IMR-90 (cell line): ENCODE measurements at regions of chr3 and their contacts with region 1.

Region 1: GRCh38 chr3:129824926-129825541 is 68.5 kb downstream of the TMCC1 start:
- DNase-seq: peak; percentile 58
- ATAC-seq: no peak
- H3K4me3 ChIP-seq: no peak overlapping the region
- H3K27ac ChIP-seq: no peak overlapping the region
- H3K4me1 ChIP-seq: peaks cover 2% of the 10 kb centered on the region; the same call in 1 of the 2 replicates
- H3K27me3 ChIP-seq: no peaks in the 10 kb centered on the region
- CTCF ChIP-seq: peak; percentile 64
- POLR2A ChIP-seq: no peak
- RAD21 ChIP-seq: peak; percentile 81

Region 2: GRCh38 chr3:129112308-129113052 is 712.6 kb before region 1 on chr3:
- CTCF ChIA-PET with region 1: no interaction called
- POLR2A ChIA-PET with region 1: no interaction called
- dilution Hi-C with region 1: no loop called
- in situ Hi-C with region 1: no loop called
- intact Hi-C with region 1: no loop called
- DNase-seq: peak; percentile 35
- ATAC-seq: no peak
- H3K4me3 ChIP-seq: no peak overlapping the region
- H3K27ac ChIP-seq: no peak overlapping the region
- H3K4me1 ChIP-seq: peaks cover 4% of the 10 kb centered on the region
- H3K27me3 ChIP-seq: no peaks in the 10 kb centered on the region
- CTCF ChIP-seq: no peak
- POLR2A ChIP-seq: no peak
- RAD21 ChIP-seq: no peak

Region 3: GRCh38 chr3:129383292-129383860 is 441.7 kb before region 1 on chr3:
- CTCF ChIA-PET with region 1: interaction called, 4 read pairs
- POLR2A ChIA-PET with region 1: no interaction called
- dilution Hi-C with region 1: no loop called
- in situ Hi-C with region 1: no loop called
- intact Hi-C with region 1: loop called (anchors 1 kb)
- DNase-seq: peak; percentile 85
- ATAC-seq: peak; percentile 98
- H3K4me3 ChIP-seq: no peak overlapping the region
- H3K27ac ChIP-seq: no peak overlapping the region
- H3K4me1 ChIP-seq: peaks cover 7% of the 10 kb centered on the region
- H3K27me3 ChIP-seq: no peaks in the 10 kb centered on the region
- CTCF ChIP-seq: peak; percentile 90
- POLR2A ChIP-seq: peak; percentile 56; the same call in 1 of the 2 replicates
- RAD21 ChIP-seq: peak; percentile 93

Region 4: GRCh38 chr3:129627429-129628168 is 197.4 kb before region 1 on chr3:
- CTCF ChIA-PET with region 1: interaction called, 4 read pairs
- POLR2A ChIA-PET with region 1: no interaction called
- dilution Hi-C with region 1: no loop called
- in situ Hi-C with region 1: no loop called
- intact Hi-C with region 1: loop called (anchors 1 kb)
- DNase-seq: peak; percentile 75
- ATAC-seq: peak; percentile 29
- H3K4me3 ChIP-seq: peak overlapping the region; percentile 29
- H3K27ac ChIP-seq: peak overlapping the region; percentile 88
- H3K4me1 ChIP-seq: peaks cover 20% of the 10 kb centered on the region
- H3K27me3 ChIP-seq: no peaks in the 10 kb centered on the region
- CTCF ChIP-seq: peak; percentile 74
- POLR2A ChIP-seq: peak; percentile 46
- RAD21 ChIP-seq: peak; percentile 89

Region 5: DNA sequence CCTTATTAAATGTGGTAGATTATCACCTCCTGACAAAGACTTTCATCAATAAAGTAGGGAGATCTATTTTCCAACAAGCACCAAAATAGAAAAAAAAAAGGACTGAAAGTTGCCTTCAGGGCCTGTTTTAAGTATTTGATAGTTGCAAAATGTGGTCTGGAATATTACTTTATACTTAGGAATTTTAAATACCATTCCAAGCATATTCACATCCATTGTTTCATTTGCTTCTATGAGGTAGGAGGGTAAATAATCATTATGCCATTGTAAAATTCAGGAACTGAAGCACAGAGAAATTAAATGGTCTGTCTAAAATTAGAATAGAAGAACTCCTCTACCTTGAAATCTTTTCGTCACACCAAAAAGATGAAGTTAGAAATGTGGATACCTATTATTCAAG is 41.6 kb before region 1 on chr3:
- CTCF ChIA-PET with region 1: no interaction called
- POLR2A ChIA-PET with region 1: no interaction called
- dilution Hi-C with region 1: no loop called
- in situ Hi-C with region 1: no loop called
- intact Hi-C with region 1: loop called (anchors 1 kb)
- DNase-seq: peak; percentile 28
- ATAC-seq: peak; percentile 44; the same call in 1 of the 2 replicates
- H3K4me3 ChIP-seq: no peak overlapping the region
- H3K27ac ChIP-seq: no peak overlapping the region
- H3K4me1 ChIP-seq: no peaks in the 10 kb centered on the region
- H3K27me3 ChIP-seq: no peaks in the 10 kb centered on the region
- CTCF ChIP-seq: no peak
- POLR2A ChIP-seq: no peak
- RAD21 ChIP-seq: no peak

Region 6: GRCh38 chr3:129934234-129935123 is 109.4 kb after region 1 on chr3:
- CTCF ChIA-PET with region 1: interaction called, 4 read pairs
- POLR2A ChIA-PET with region 1: no interaction called
- dilution Hi-C with region 1: no loop called
- in situ Hi-C with region 1: loop called (anchors 5 kb)
- intact Hi-C with region 1: loop called (anchors 1 kb)
- DNase-seq: peak; percentile 16
- ATAC-seq: peak; percentile 89
- H3K4me3 ChIP-seq: no peak overlapping the region; the same call in 1 of the 2 replicates
- H3K27ac ChIP-seq: no peak overlapping the region
- H3K4me1 ChIP-seq: 0 out of 2 replicates have a peak, but pooled peaks cover 2% of the 10 kb centered on the region
- H3K27me3 ChIP-seq: peaks cover 21% of the 10 kb centered on the region
- CTCF ChIP-seq: peak; percentile 83
- POLR2A ChIP-seq: no peak
- RAD21 ChIP-seq: peak; percentile 77